Activated B cell treated with CpG ODN at 0.5 μM for 24 hours (primary cell): ENCODE measurements at regions of chr5 and their contacts with region 1.

Region 1: DNA sequence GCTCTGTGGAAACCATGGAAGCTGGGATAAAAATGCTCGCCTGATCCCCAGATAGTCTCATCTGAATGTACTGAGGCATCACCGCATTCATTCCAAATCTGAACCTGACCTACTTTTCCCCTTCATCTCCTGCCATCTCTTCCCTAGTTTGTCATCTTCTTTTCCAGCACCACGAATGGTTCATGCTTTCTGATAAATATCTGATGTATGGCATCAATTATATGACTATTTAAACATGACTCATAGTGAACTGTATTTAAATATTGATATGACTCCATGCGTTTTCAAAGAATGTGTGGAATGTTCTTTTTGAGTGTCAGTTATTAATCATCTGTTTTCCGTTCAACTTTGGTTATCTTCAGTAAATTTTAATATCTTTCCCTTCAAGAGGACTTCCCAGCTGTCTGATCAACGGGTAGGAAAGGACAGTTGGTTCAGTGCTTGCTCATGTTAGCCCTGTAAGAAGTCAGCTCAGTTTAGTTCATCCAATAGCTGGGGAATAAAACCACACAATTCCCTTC is 21.1 kb downstream of the BASP1 start:
- DNase-seq: no peak
- ATAC-seq: no peak
- H3K4me3 Mint-ChIP-seq: no peak overlapping the region
- H3K27ac Mint-ChIP-seq: peak overlapping the region; percentile 1
- H3K4me1 Mint-ChIP-seq: peaks cover 89% of the 10 kb centered on the region
- H3K27me3 Mint-ChIP-seq: no peaks in the 10 kb centered on the region
- CTCF ChIP-seq: no peak

Region 2: DNA sequence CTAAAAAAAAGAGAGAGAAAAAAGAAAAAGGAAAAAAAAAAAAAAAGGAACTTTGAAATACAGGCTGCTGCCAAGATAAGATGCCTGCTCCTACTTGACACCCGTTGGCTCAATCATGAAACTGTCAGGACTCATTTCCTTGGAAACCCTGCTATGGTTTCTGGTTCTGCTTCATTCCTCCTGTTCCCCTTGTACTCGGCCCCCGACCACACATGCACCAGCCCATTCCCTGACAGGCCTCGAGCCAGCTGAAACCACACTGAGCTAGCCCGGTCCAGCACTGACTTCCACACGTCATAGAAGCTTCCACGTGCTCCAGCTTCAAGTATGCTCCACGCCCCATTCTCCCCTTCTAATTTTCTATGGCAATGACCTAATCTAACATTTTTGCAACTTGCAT is 395.7 kb before region 1 on chr5:
- CTCF ChIA-PET with region 1: no interaction called
- POLR2A ChIA-PET with region 1: interaction called, 15 read pairs
- intact Hi-C with region 1: no loop called
- DNase-seq: no peak
- ATAC-seq: no peak
- H3K4me3 Mint-ChIP-seq: no peak overlapping the region
- H3K27ac Mint-ChIP-seq: no peak overlapping the region
- H3K4me1 Mint-ChIP-seq: no peaks in the 10 kb centered on the region
- H3K27me3 Mint-ChIP-seq: peaks cover 3% of the 10 kb centered on the region
- CTCF ChIP-seq: no peak

Region 3: GRCh38 chr5:17248999-17249634 is 10.5 kb after region 1 on chr5:
- CTCF ChIA-PET with region 1: no interaction called
- POLR2A ChIA-PET with region 1: interaction called, 8 read pairs
- intact Hi-C with region 1: loop called (anchors 1 kb)
- DNase-seq: no peak
- ATAC-seq: no peak
- H3K4me3 Mint-ChIP-seq: no peak overlapping the region
- H3K27ac Mint-ChIP-seq: peak overlapping the region; percentile 65
- H3K4me1 Mint-ChIP-seq: peaks cover 70% of the 10 kb centered on the region
- H3K27me3 Mint-ChIP-seq: no peaks in the 10 kb centered on the region
- CTCF ChIP-seq: no peak